ENCODE measurements at regions of chr9 and their contacts with region 1.

Region 1: GRCh38 chr9:117073539-117074341 is 341.1 kb downstream of the ASTN2 start:
- DNase-seq: peak; percentile 8 to 74
- H3K4me3 ChIP-seq: no peak overlapping the region
- H3K4me1 ChIP-seq: no peaks in the 10 kb centered on the region
- H3K27me3 ChIP-seq: no peaks in the 10 kb centered on the region

Region 2: GRCh38 chr9:117411548-117411947 is 337.8 kb after region 1 on chr9:
- in situ Hi-C with region 1: loop called (anchors 10 kb)
- DNase-seq: peak; percentile 18 to 74
- H3K4me3 ChIP-seq: no peak overlapping the region
- H3K4me1 ChIP-seq: no peaks in the 10 kb centered on the region
- H3K27me3 ChIP-seq: peaks cover 34% of the 10 kb centered on the region

Region 3: GRCh38 chr9:117718085-117718484 is 644.3 kb after region 1 on chr9:
- in situ Hi-C with region 1: no loop called
- DNase-seq: no peak
- H3K4me3 ChIP-seq: no peak overlapping the region
- H3K4me1 ChIP-seq: no peaks in the 10 kb centered on the region
- H3K27me3 ChIP-seq: no peaks in the 10 kb centered on the region; the same call in 1 of the 2 replicates

Measured in HAP-1 (cell line).